ENCODE measurements at regions of chr6 and their contacts with region 1.

Region 1: DNA sequence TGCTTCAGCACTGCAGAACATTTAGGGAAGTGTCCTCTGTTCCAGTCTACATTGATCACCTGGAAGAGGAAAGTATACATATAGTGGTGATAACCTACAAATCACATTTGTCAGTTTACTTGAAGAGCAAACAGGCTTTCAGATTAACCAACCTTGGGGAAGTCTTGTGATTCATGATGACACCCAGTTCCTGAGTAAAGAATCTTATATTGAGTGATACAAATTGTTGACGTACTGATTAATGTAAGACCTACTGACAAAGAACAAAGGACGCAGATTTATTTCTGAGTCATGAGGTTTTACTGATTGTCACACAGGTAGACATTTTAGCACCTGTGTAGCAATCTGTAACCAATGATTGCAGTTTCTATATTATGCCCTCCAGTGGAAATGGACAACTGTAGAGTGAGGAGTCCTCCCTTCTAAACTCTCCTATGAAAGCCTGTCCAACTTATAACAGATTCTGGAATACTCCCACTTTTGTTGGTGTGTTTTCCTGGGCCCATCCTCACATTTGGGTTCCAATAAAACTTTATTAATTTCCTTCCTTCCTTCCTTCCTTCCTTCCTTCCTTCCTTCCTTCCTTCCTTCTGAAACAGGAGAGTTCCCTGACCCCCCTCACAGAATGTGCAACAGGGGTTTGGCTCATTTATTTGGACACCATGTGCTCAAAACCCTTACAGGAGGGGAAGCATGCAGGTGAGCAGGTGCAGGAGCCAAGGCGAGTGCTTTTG is 113.5 kb downstream of the SLC35B3 start:
- DNase-seq: peak in 1 of 2 experiments; percentile 7
- H3K4me3 ChIP-seq: no peak overlapping the region
- H3K4me3 Mint-ChIP-seq: no peak overlapping the region
- H3K27ac Mint-ChIP-seq: peak overlapping the region; percentile 12
- H3K4me1 ChIP-seq: peaks cover 11% of the 10 kb centered on the region
- H3K4me1 Mint-ChIP-seq: peaks cover 16% of the 10 kb centered on the region
- H3K27me3 ChIP-seq: no peaks in the 10 kb centered on the region
- H3K27me3 Mint-ChIP-seq: no peaks in the 10 kb centered on the region
- CTCF ChIP-seq: no peak

Region 2: DNA sequence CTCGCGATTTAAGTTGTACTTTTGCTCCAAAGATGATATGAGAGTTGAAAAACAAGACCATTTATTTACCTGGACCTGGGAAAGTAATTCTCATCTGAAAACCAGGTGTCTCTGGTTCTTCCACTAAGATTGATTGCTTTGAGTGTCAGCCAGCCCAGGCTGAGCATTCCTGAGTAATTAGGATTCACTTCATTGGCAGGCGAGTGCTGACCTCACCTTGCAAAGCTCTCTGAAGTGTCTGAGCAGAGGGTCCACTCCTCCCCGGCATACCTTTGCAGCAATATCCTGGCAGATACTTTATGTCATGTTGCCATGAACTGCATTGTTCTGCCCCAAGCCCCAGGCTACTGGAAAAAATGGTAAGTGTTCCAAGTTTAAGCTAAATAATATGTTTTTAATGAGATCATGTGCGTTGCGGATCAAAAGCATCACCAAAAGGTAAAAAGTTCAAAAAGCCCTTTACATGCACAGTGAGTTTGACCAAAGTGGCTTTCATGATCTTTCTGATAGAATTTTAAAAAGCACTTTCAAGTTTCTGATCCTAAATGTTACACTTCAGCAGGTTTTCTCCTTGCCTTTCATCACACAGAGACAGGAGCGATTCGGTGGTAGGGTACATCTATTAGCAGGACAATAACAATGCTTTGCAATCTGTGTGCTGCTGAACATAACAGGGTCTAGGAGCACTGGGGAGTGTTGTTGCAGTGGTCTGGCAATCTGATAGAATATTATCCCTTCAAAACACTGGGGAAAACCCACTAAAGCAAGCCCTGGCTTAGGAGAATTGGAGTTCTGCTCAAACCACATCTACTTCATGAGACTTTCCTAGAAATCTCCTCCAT is 91.7 kb before region 1 on chr6:
- CTCF ChIA-PET with region 1: no interaction called
- POLR2A ChIA-PET with region 1: no interaction called
- intact Hi-C with region 1: loop called (anchors 5 kb)
- DNase-seq: peak; percentile 79 to 89
- H3K4me3 ChIP-seq: no peak overlapping the region
- H3K4me3 Mint-ChIP-seq: peak overlapping the region; percentile 61
- H3K27ac Mint-ChIP-seq: peak overlapping the region; percentile 83
- H3K4me1 ChIP-seq: peaks cover 54% of the 10 kb centered on the region
- H3K4me1 Mint-ChIP-seq: peaks cover 31% of the 10 kb centered on the region
- H3K27me3 ChIP-seq: no peaks in the 10 kb centered on the region
- H3K27me3 Mint-ChIP-seq: no peaks in the 10 kb centered on the region
- CTCF ChIP-seq: no peak

Region 3: DNA sequence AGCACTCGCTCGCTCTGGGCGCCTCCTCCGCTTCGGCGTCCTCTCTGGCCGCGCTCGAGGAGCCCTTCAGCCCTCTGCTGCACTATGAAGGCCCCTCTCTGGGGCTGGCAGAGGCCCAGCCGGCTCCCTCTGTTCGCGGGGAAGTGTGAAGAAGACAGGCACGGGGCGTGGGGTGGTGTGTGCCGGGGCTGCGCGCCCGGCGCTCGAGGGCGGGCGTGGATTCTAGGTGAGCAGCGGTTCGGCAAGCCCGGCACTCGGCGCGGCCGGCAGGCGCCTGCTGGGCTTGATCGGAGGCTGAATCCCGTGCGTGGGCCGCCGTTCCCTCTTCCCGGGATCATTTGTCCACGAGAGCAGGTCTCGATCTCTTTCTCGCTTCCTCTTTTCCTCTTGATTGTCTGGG is 39.5 kb before region 1 on chr6:
- CTCF ChIA-PET with region 1: no interaction called
- POLR2A ChIA-PET with region 1: no interaction called
- intact Hi-C with region 1: no loop called
- DNase-seq: no peak
- H3K4me3 ChIP-seq: no peak overlapping the region
- H3K4me3 Mint-ChIP-seq: no peak overlapping the region
- H3K27ac Mint-ChIP-seq: peak overlapping the region; percentile 7
- H3K4me1 ChIP-seq: no peaks in the 10 kb centered on the region
- H3K4me1 Mint-ChIP-seq: peaks cover 9% of the 10 kb centered on the region
- H3K27me3 ChIP-seq: no peaks in the 10 kb centered on the region
- H3K27me3 Mint-ChIP-seq: no peaks in the 10 kb centered on the region
- CTCF ChIP-seq: no peak